Naive thymus-derived CD4-positive, alpha-beta T cell (primary cell): ENCODE measurements at regions of chr9 and their contacts with region 1.

Region 1: GRCh38 chr9:21974548-21975409 is 19.4 kb downstream of the CDKN2A start:
- DNase-seq: peak in 3 of 9 donors; percentile 31 to 46 (median 41)
- ATAC-seq: peak; percentile 68
- H3K4me3 ChIP-seq: peak overlapping the region; percentile 43
- H3K4me3 Mint-ChIP-seq: peak overlapping the region; percentile 74 to 90 (median 82)
- H3K27ac ChIP-seq: no peak overlapping the region
- H3K27ac Mint-ChIP-seq: peak overlapping the region in 3 of 9 donors; percentile 26 to 64 (median 58)
- H3K4me1 ChIP-seq: peaks cover 13 to 17% of the 10 kb centered on the region in 2 donors
- H3K4me1 Mint-ChIP-seq: peaks cover 0 to 31% (median 21%) of the 10 kb centered on the region in 7 donors
- H3K27me3 ChIP-seq: peaks cover 57 to 75% of the 10 kb centered on the region in 2 donors
- H3K27me3 Mint-ChIP-seq: peaks cover 92 to 97% (median 93%) of the 10 kb centered on the region in 5 donors

Region 2: GRCh38 chr9:21413624-21414023 is 561.2 kb before region 1 on chr9:
- CTCF ChIA-PET with region 1: no interaction called
- POLR2A ChIA-PET with region 1: no interaction called
- intact Hi-C with region 1: no loop called
- DNase-seq: peak in 5 of 9 donors; percentile 14 to 31 (median 22)
- ATAC-seq: peak; percentile 70
- H3K4me3 ChIP-seq: no peak overlapping the region
- H3K4me3 Mint-ChIP-seq: peak overlapping the region in 2 of 10 donors; percentile 17 to 36
- H3K27ac ChIP-seq: no peak overlapping the region
- H3K27ac Mint-ChIP-seq: no peak overlapping the region
- H3K4me1 ChIP-seq: peaks cover 0 to 7% of the 10 kb centered on the region in 2 donors
- H3K4me1 Mint-ChIP-seq: peaks cover 0 to 18% (median 16%) of the 10 kb centered on the region in 7 donors
- H3K27me3 ChIP-seq: no peaks in the 10 kb centered on the region
- H3K27me3 Mint-ChIP-seq: peaks cover 0 to 36% (median 10%) of the 10 kb centered on the region in 5 donors

Region 3: GRCh38 chr9:21802195-21803000 is 172.4 kb before region 1 on chr9 and contains the start of gene MTAP:
- CTCF ChIA-PET with region 1: no interaction called
- POLR2A ChIA-PET with region 1: no interaction called
- intact Hi-C with region 1: loop called in 1 of 2 experiments (anchors 5 kb)
- DNase-seq: peak in 7 of 9 donors; percentile 46 to 81 (median 72)
- ATAC-seq: peak; percentile 88
- H3K4me3 ChIP-seq: peak within 1 kb of the TSS; percentile 92
- H3K4me3 Mint-ChIP-seq: peak within 1 kb of the TSS; percentile 96 to 100 (median 99)
- H3K27ac ChIP-seq: peak within 1 kb of the TSS; percentile 69
- H3K27ac Mint-ChIP-seq: peak within 1 kb of the TSS; percentile 92 to 99 (median 96)
- H3K4me1 ChIP-seq: peaks cover 10 to 25% of the 10 kb centered on the region in 2 donors
- H3K4me1 Mint-ChIP-seq: peaks cover 24 to 52% (median 40%) of the 10 kb centered on the region in 7 donors
- H3K27me3 ChIP-seq: peaks cover 0 to 4% of the 10 kb centered on the region in 2 donors
- H3K27me3 Mint-ChIP-seq: peaks cover 0 to 46% (median 8%) of the 10 kb centered on the region in 5 donors
- total RNA-seq, gene MTAP: 29.0 to 50.7 (median 43.2) TPM

Region 4: GRCh38 chr9:21989440-21990189 is 14.8 kb after region 1 on chr9:
- CTCF ChIA-PET with region 1: no interaction called
- POLR2A ChIA-PET with region 1: interaction called, 3 read pairs
- intact Hi-C with region 1: loop called (anchors 1 kb)
- DNase-seq: no peak
- ATAC-seq: no peak
- H3K4me3 ChIP-seq: no peak overlapping the region
- H3K4me3 Mint-ChIP-seq: peak overlapping the region in 1 of 10 donors; percentile 5
- H3K27ac ChIP-seq: no peak overlapping the region
- H3K27ac Mint-ChIP-seq: peak overlapping the region in 3 of 9 donors; percentile 13 to 63 (median 51)
- H3K4me1 ChIP-seq: peaks cover 8 to 10% of the 10 kb centered on the region in 2 donors
- H3K4me1 Mint-ChIP-seq: peaks cover 0 to 33% (median 9%) of the 10 kb centered on the region in 7 donors
- H3K27me3 ChIP-seq: peaks cover 0 to 41% of the 10 kb centered on the region in 2 donors
- H3K27me3 Mint-ChIP-seq: peaks cover 52 to 76% (median 59%) of the 10 kb centered on the region in 5 donors

Region 5: DNA sequence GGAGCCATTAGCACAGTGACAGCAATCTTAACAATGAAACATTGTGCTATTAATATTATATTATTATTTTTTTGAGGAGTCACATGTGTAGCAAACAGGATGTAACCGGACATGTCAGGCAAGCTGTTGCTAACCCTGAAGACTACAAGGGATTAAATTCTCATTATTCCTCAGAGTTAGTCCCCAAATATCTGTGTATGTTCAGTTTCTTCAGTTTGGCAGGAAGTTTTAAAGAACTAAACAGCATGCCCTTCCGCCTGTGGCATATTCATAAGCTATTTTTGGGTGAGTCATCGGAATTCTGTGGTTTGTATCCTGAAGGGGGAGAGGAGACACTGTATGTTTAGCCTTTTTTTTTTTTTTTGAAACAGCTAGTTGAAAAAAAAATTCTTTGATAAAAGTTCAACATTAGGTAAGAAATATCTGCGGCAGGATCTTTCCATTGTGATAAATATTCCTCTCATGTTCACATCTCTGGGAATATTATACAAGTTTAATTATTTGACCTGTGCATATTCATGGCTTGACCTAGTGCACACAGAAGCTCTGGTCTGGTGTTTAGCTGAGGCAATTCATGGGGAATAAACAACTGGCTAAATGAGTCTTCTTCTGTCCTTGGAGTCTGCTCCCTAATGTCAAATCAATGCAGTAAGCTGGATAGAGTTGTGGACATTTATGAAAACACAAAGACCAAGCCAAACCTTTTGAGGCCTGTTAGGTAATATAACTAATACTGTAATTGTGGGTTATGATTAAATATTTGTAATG is 237.0 kb after region 1 on chr9:
- CTCF ChIA-PET with region 1: no interaction called
- POLR2A ChIA-PET with region 1: no interaction called
- intact Hi-C with region 1: no loop called
- DNase-seq: no peak
- ATAC-seq: no peak
- H3K4me3 ChIP-seq: no peak overlapping the region
- H3K4me3 Mint-ChIP-seq: no peak overlapping the region
- H3K27ac ChIP-seq: no peak overlapping the region
- H3K27ac Mint-ChIP-seq: no peak overlapping the region
- H3K4me1 ChIP-seq: peaks cover 0 to 4% of the 10 kb centered on the region in 2 donors
- H3K4me1 Mint-ChIP-seq: peaks cover 6 to 15% (median 12%) of the 10 kb centered on the region in 7 donors
- H3K27me3 ChIP-seq: no peaks in the 10 kb centered on the region
- H3K27me3 Mint-ChIP-seq: peaks cover 0 to 24% (median 0%) of the 10 kb centered on the region in 5 donors

Region 6: DNA sequence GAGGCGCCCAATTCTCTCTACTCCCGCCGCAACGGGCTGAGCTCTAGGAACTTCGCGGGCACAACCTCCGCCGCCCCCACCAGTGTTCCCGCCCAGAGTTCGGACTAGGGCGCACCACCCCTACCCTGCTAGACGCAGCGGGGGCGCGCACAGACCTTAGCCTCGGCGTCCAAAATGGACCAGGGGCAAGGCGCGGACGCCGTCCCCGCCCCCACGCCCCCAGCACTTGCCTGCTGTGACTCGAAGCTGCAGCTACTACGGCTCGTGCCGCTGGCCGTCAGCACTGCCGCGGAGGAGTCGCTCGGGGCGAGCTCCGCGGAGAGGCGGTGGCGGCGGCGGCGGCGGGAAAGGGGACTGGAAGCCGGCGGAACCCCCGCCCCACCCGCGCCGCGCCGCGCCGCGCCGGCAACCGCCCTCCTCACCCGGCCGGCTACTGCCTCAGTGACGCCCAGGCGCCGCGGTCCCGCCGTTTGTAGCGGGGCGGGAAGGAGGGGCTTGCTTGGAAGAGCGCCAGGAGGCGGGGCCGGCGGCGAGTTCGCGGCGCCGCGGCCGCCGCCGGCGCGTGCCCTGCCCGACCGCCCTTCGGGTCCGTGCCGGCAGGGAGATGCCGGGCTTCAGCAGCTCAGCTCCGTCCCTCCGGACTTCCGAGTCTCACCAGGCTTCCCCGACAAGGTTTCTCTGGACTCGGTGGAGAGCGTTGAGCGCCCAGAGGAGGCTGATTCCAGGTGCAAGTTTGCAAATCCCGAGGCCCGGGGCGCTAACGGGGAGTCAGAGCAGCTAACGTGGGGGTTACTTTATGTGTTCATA is 1846.8 kb after region 1 on chr9:
- CTCF ChIA-PET with region 1: no interaction called
- POLR2A ChIA-PET with region 1: no interaction called
- intact Hi-C with region 1: loop called in 1 of 2 experiments (anchors 5 kb)
- DNase-seq: no peak
- ATAC-seq: no peak
- H3K4me3 ChIP-seq: no peak overlapping the region
- H3K4me3 Mint-ChIP-seq: peak overlapping the region in 3 of 10 donors; percentile 6 to 40 (median 9)
- H3K27ac ChIP-seq: no peak overlapping the region
- H3K27ac Mint-ChIP-seq: no peak overlapping the region
- H3K4me1 ChIP-seq: no peaks in the 10 kb centered on the region
- H3K4me1 Mint-ChIP-seq: peaks cover 0 to 5% (median 0%) of the 10 kb centered on the region in 7 donors
- H3K27me3 ChIP-seq: peaks cover 0 to 5% of the 10 kb centered on the region in 2 donors
- H3K27me3 Mint-ChIP-seq: peaks cover 24 to 35% (median 31%) of the 10 kb centered on the region in 5 donors